CD4-positive, alpha-beta memory T cell (primary cell): ENCODE measurements at regions of chr7 and their contacts with region 1.

Region 1: GRCh38 chr7:2720582-2721491 is 32.8 kb downstream of the AMZ1 start:
- DNase-seq: peak; percentile 41 to 74 (median 46)
- H3K4me3 ChIP-seq: no peak overlapping the region
- H3K4me3 Mint-ChIP-seq: peak overlapping the region in 5 of 8 donors; percentile 18 to 67 (median 40)
- H3K27ac ChIP-seq: no peak overlapping the region
- H3K27ac Mint-ChIP-seq: peak overlapping the region in 3 of 7 donors; percentile 16 to 53 (median 43)
- H3K4me1 ChIP-seq: peaks cover 48% of the 10 kb centered on the region
- H3K4me1 Mint-ChIP-seq: peaks cover 20 to 48% (median 32%) of the 10 kb centered on the region in 4 donors
- H3K27me3 ChIP-seq: no peaks in the 10 kb centered on the region
- H3K27me3 Mint-ChIP-seq: peaks cover 0 to 3% of the 10 kb centered on the region in 2 donors

Region 2: GRCh38 chr7:2009541-2010001 is 711.3 kb before region 1 on chr7:
- CTCF ChIA-PET with region 1: no interaction called
- POLR2A ChIA-PET with region 1: no interaction called
- intact Hi-C with region 1: no loop called
- DNase-seq: no peak
- H3K4me3 ChIP-seq: no peak overlapping the region
- H3K4me3 Mint-ChIP-seq: no peak overlapping the region
- H3K27ac ChIP-seq: no peak overlapping the region
- H3K27ac Mint-ChIP-seq: no peak overlapping the region
- H3K4me1 ChIP-seq: no peaks in the 10 kb centered on the region
- H3K4me1 Mint-ChIP-seq: peaks cover 1 to 9% (median 6%) of the 10 kb centered on the region in 4 donors
- H3K27me3 ChIP-seq: no peaks in the 10 kb centered on the region
- H3K27me3 Mint-ChIP-seq: no peaks in the 10 kb centered on the region

Region 3: DNA sequence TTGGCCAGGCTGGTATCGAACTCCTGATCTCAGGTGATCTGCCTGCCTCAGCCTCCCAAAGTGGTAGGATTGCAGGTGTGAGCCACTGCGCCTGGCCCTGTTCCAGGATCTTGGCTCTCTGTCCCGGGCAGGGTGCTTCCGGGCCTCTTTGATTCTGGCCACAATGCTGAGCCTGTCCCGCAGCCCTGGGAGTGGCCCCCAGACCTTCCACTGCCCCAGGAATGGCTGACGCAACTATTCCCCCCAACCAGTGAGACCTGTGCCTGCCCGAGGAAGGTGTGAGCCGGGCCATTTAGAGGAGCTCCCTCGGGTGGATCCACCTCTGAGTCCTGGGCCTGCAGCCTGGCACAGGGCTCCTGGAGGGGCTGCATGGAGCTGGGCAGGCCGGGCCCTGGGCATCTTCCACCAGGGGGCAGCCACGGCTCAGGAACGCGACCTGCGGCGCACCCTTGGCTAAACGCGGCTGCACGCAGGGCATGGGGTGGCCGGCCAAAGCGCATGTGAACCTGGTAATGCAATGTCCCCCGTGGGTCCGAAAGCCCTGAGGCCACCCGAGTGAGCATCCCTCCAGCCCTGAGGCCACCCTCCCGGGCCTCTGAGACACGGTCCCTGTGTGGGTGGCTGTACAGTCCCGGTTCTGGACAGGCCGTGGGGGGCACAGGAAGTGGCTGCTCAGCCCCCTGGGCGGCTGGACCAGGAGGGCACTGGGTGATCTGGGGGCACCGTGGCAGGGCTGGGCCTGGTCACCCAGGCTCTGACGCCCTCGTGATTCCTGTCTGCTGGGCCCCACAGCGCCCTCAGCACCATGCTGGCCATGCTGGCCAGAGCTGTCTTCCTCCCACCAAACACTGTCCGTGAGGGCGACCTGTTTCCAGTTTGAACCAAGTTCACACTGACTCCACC is 269.4 kb before region 1 on chr7:
- CTCF ChIA-PET with region 1: interaction called, 10 read pairs
- POLR2A ChIA-PET with region 1: no interaction called
- intact Hi-C with region 1: no loop called
- DNase-seq: peak; percentile 60 to 68 (median 64)
- H3K4me3 ChIP-seq: peak overlapping the region in 1 of 2 donors; percentile 32
- H3K4me3 Mint-ChIP-seq: peak overlapping the region in 6 of 8 donors; percentile 15 to 67 (median 52)
- H3K27ac ChIP-seq: no peak overlapping the region
- H3K27ac Mint-ChIP-seq: peak overlapping the region in 1 of 7 donors; percentile 46
- H3K4me1 ChIP-seq: peaks cover 10% of the 10 kb centered on the region
- H3K4me1 Mint-ChIP-seq: peaks cover 0 to 9% (median 5%) of the 10 kb centered on the region in 4 donors
- H3K27me3 ChIP-seq: no peaks in the 10 kb centered on the region
- H3K27me3 Mint-ChIP-seq: no peaks in the 10 kb centered on the region

Region 4: DNA sequence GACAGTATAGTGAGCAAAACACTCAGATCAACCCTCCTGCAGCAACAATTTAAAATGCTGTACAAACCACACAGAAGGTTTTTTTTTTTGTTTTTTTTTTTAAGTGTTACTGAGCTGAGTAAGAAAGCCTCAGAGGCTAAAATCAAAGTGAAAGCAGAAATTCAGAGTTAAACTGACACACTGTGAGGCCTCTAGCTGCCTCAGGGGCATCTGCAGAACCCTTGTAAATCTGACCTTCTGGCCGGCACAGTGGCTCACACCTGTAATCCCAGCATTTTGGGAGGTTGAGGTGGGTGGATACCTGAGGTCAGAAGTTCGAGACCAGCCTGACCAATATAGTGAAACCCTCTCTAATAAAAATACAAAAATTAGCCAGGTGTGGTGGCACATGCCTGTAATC is 130.7 kb after region 1 on chr7:
- CTCF ChIA-PET with region 1: no interaction called
- POLR2A ChIA-PET with region 1: no interaction called
- intact Hi-C with region 1: no loop called
- DNase-seq: no peak
- H3K4me3 ChIP-seq: no peak overlapping the region
- H3K4me3 Mint-ChIP-seq: no peak overlapping the region
- H3K27ac ChIP-seq: no peak overlapping the region
- H3K27ac Mint-ChIP-seq: peak overlapping the region in 5 of 7 donors; percentile 5 to 70 (median 58)
- H3K4me1 ChIP-seq: peaks cover 8% of the 10 kb centered on the region
- H3K4me1 Mint-ChIP-seq: peaks cover 4 to 6% (median 5%) of the 10 kb centered on the region in 4 donors
- H3K27me3 ChIP-seq: no peaks in the 10 kb centered on the region
- H3K27me3 Mint-ChIP-seq: no peaks in the 10 kb centered on the region